HepG2 (cell line): ENCODE measurements at regions of chr16 and their contacts with region 1.

Region 1: GRCh38 chr16:77236063-77236511 is 36.9 kb downstream of the SYCE1L start:
- DNase-seq: peak; percentile 80
- ATAC-seq: peak; percentile 98
- H3K4me3 ChIP-seq: no peak overlapping the region
- H3K27ac ChIP-seq: no peak overlapping the region
- H3K4me1 ChIP-seq: no peaks in the 10 kb centered on the region
- H3K27me3 ChIP-seq: peaks cover 0 to 41% of the 10 kb centered on the region in 2 experiments
- CTCF ChIP-seq: peak; percentile 100
- EP300 ChIP-seq: no peak
- POLR2A ChIP-seq: no peak
- RAD21 ChIP-seq: peak; percentile 100

Region 2: GRCh38 chr16:77113835-77114234 is 122.3 kb before region 1 on chr16:
- CTCF ChIA-PET with region 1: no interaction called
- POLR2A ChIA-PET with region 1: no interaction called
- in situ Hi-C with region 1: no loop called
- intact Hi-C with region 1: no loop called
- DNase-seq: no peak
- ATAC-seq: no peak
- H3K4me3 ChIP-seq: no peak overlapping the region
- H3K27ac ChIP-seq: no peak overlapping the region
- H3K4me1 ChIP-seq: no peaks in the 10 kb centered on the region
- H3K27me3 ChIP-seq: no peaks in the 10 kb centered on the region
- CTCF ChIP-seq: no peak
- EP300 ChIP-seq: no peak
- POLR2A ChIP-seq: no peak
- RAD21 ChIP-seq: no peak

Region 3: DNA sequence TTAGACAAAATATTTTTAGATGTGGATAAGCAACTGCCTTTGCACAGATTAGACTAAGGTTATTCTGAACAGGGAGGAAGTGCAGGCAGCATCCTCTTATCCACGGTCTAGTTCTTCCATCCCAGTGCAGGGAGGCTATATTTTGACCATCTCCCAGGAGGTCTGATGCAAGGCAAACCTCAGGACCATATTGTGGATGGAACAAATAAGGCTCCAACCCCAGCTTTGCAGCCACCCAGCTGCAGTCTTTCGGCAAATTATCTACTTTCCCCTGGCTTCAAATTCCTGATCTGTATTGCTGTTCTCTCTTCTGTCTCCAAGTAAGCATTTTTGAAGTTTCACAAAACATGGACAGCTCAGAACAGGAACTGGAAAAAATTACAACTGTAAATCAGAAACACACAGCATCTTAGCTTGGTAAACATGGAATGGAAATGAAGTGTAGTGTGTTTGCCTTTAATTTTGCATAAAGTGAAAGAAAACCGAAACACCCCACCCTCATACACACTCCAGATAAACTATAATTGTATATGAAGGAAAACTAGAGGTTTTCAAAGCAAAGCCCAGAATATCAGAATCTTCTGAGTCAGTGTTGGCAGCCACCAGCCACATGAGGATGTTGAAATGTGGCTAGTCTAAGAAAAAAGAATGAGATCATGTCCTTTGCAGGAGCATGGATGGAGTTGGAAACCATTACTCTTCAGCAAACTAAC is 78.6 kb before region 1 on chr16:
- CTCF ChIA-PET with region 1: no interaction called
- POLR2A ChIA-PET with region 1: no interaction called
- in situ Hi-C with region 1: no loop called
- intact Hi-C with region 1: no loop called
- DNase-seq: no peak
- ATAC-seq: no peak
- H3K4me3 ChIP-seq: no peak overlapping the region
- H3K27ac ChIP-seq: no peak overlapping the region
- H3K4me1 ChIP-seq: no peaks in the 10 kb centered on the region
- H3K27me3 ChIP-seq: peaks cover 0 to 5% of the 10 kb centered on the region in 2 experiments; a peak in 2 of 5 replicates
- CTCF ChIP-seq: no peak
- EP300 ChIP-seq: no peak
- POLR2A ChIP-seq: no peak
- RAD21 ChIP-seq: no peak

Region 4: GRCh38 chr16:77211880-77212740 is 24.0 kb before region 1 on chr16:
- CTCF ChIA-PET with region 1: no interaction called
- POLR2A ChIA-PET with region 1: no interaction called
- in situ Hi-C with region 1: no loop called
- intact Hi-C with region 1: no loop called
- DNase-seq: no peak
- ATAC-seq: peak; percentile 74
- H3K4me3 ChIP-seq: peak overlapping the region; percentile 51 to 76 (median 54)
- H3K27ac ChIP-seq: no peak overlapping the region
- H3K4me1 ChIP-seq: peaks cover 14% of the 10 kb centered on the region
- H3K27me3 ChIP-seq: peaks cover 0 to 27% of the 10 kb centered on the region in 2 experiments; a peak in 2 of 5 replicates
- CTCF ChIP-seq: no peak
- EP300 ChIP-seq: no peak
- POLR2A ChIP-seq: no peak
- RAD21 ChIP-seq: no peak

Region 5: GRCh38 chr16:77406677-77407076 is 170.6 kb after region 1 on chr16:
- CTCF ChIA-PET with region 1: no interaction called
- POLR2A ChIA-PET with region 1: no interaction called
- in situ Hi-C with region 1: no loop called
- intact Hi-C with region 1: loop called (anchors 1 kb)
- DNase-seq: peak; percentile 15
- ATAC-seq: peak; percentile 40; the same call in 1 of the 3 replicates
- H3K4me3 ChIP-seq: no peak overlapping the region
- H3K27ac ChIP-seq: no peak overlapping the region
- H3K4me1 ChIP-seq: no peaks in the 10 kb centered on the region
- H3K27me3 ChIP-seq: no peaks in the 10 kb centered on the region
- CTCF ChIP-seq: peak; percentile 28
- EP300 ChIP-seq: no peak
- POLR2A ChIP-seq: no peak
- RAD21 ChIP-seq: peak; percentile 13; the same call in 1 of the 2 replicates

Region 6: DNA sequence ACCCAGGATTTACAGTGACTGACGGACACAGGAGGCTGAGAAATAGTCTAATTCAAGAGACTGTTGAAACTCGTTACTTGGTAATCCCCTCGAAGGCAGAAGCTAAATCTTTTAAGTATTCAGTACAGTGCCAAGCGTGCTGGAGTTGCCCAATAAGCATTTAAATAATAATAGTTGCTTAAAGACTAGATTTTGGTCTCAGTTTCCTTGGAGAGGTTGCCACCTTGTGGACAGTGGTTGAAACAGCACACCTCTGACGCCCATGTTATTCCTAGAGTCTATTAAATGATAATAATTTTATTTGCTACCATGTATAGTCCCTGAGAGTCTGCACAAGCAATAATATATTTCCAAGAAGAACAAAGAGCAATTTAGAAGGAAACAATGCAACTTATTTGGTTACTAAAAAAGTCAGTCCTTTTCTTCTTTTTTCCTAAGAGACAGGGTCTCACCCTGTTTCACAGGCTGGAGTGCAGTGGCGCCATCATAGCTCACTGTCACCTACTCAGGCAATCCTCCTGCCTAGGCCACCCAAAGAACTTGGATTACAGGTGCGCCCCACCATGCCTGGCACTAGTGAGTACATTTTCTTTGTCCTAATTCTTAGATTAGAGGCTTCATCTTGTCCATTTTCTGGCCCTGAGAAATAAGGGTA is 348.2 kb after region 1 on chr16:
- CTCF ChIA-PET with region 1: interaction called, 354 read pairs
- POLR2A ChIA-PET with region 1: no interaction called
- in situ Hi-C with region 1: loop called (anchors 5 kb)
- intact Hi-C with region 1: loop called (anchors 1 kb)
- DNase-seq: peak; percentile 44
- ATAC-seq: peak; percentile 77
- H3K4me3 ChIP-seq: no peak overlapping the region
- H3K27ac ChIP-seq: no peak overlapping the region
- H3K4me1 ChIP-seq: no peaks in the 10 kb centered on the region
- H3K27me3 ChIP-seq: peaks cover 2 to 8% of the 10 kb centered on the region in 2 experiments; a peak in 2 of 5 replicates
- CTCF ChIP-seq: peak; percentile 84
- EP300 ChIP-seq: no peak
- POLR2A ChIP-seq: no peak
- RAD21 ChIP-seq: peak; percentile 89

Region 7: DNA sequence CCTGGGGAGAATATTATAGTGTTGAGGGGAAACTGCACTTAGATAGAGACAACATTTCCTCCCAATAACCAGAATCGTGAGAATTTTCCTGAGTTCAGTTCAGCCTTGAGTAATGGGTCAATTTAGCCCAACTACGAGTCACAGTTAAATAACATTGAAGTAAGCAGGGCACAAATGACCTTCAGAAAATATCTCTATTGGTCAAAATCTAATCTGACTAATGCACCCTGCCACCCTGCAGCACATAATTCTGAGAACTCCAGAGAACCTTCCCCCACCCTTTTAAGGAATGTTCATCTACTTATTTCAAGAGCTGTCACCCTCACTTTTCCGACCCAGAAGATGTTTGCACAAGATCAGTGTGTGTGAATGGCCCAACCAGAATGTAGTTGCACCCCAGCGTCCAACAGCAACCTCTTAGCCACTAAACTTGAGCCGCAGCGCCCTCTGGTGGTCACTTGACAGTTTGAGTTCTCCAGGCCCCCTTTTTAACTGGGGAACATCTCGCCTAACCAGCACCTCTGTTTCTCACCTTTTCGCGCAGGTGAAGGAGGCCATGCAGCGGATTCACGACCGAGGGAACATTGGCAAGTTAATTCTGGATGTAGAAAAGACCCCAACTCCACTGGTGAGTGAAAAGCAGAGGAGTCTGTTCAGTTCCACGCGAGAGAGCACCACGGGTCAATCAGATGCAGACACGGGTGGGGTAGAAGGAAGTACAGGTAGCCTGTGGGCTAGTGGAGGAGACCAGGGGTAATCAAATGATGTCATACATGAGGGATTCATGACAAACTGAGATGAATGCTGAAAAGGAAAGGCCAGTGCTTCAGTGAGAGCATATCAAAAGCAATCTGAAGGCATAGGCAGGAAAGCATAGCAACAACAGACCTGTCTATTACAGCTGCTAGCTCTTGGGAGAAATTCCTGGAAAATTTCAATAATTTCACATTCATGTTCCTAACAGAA is 735.5 kb after region 1 on chr16:
- CTCF ChIA-PET with region 1: interaction called, 4 read pairs
- POLR2A ChIA-PET with region 1: no interaction called
- in situ Hi-C with region 1: loop called (anchors 25 kb)
- intact Hi-C with region 1: loop called (anchors 2 kb)
- DNase-seq: peak; percentile 67
- ATAC-seq: peak; percentile 91
- H3K4me3 ChIP-seq: no peak overlapping the region
- H3K27ac ChIP-seq: no peak overlapping the region
- H3K4me1 ChIP-seq: no peaks in the 10 kb centered on the region
- H3K27me3 ChIP-seq: peaks cover 0 to 7% of the 10 kb centered on the region in 2 experiments; a peak in 1 of 5 replicates
- CTCF ChIP-seq: peak; percentile 95
- EP300 ChIP-seq: no peak
- POLR2A ChIP-seq: no peak
- RAD21 ChIP-seq: peak; percentile 87

Region 8: DNA sequence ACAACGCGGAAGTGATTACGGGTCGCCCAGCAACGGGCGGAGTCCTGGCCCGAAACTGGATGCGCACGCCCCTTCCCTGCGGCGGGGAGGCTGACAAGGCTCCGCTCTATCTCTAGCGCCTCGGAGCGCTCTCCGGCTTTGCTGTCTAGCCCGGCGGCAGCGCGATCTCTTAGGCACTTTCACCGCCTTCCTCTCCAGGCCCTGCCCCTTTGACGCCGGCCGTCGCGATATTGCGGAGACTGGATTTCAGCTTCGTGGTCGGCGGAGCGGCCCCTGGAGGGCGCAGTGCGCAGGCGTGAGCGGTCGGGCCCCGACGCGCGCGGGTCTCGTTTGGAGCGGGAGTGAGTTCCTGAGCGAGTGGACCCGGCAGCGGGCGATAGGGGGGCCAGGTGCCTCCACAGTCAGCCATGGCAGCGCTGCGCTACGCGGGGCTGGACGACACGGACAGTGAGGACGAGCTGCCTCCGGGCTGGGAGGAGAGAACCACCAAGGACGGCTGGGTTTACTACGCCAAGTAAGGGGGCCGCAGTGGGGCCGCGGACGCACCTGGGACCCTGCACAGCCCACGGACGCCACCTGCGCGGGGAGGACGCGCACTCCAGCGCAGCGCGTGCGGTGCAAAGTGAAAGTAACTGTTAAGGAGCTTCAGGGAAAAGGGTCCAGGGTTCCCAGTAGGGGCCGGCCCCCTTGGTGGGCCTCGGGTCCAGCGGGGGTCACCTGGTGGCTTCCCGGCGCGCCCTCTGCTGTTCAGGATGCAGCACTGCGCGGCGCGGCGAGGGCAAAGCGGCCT is 863.5 kb after region 1 on chr16 and contains the start of gene WWOX:
- CTCF ChIA-PET with region 1: no interaction called
- POLR2A ChIA-PET with region 1: no interaction called
- in situ Hi-C with region 1: no loop called
- intact Hi-C with region 1: loop called (anchors 5 kb)
- DNase-seq: peak; percentile 96
- ATAC-seq: peak; percentile 95
- H3K4me3 ChIP-seq: peak within 1 kb of the TSS; percentile 70 to 93 (median 92)
- H3K27ac ChIP-seq: peak within 1 kb of the TSS; percentile 90
- H3K4me1 ChIP-seq: peaks cover 54% of the 10 kb centered on the region
- H3K27me3 ChIP-seq: no peaks in the 10 kb centered on the region; a peak in 1 of 5 replicates
- CTCF ChIP-seq: peak; percentile 87
- EP300 ChIP-seq: no peak; a peak in 2 of 4 replicates
- POLR2A ChIP-seq: peak; percentile 86 to 93
- RAD21 ChIP-seq: peak; percentile 78
- total RNA-seq, gene WWOX: 37.4 and 38.4 TPM in 2 replicates